A673 (cell line): ENCODE measurements at regions of chr18 and their contacts with region 1.

Region 1: GRCh38 chr18:31610286-31611205 is 18.9 kb downstream of the TTR start:
- DNase-seq: no peak
- H3K4me3 ChIP-seq: no peak overlapping the region
- H3K27ac ChIP-seq: no peak overlapping the region
- H3K4me1 ChIP-seq: no peaks in the 10 kb centered on the region
- H3K27me3 ChIP-seq: no peaks in the 10 kb centered on the region
- CTCF ChIP-seq: no peak

Region 2: GRCh38 chr18:31631526-31631925 is 21.0 kb after region 1 on chr18:
- CTCF ChIA-PET with region 1: no interaction called
- POLR2A ChIA-PET with region 1: no interaction called
- intact Hi-C with region 1: loop called (anchors 2 kb)
- DNase-seq: no peak
- H3K4me3 ChIP-seq: no peak overlapping the region
- H3K27ac ChIP-seq: no peak overlapping the region
- H3K4me1 ChIP-seq: no peaks in the 10 kb centered on the region
- H3K27me3 ChIP-seq: no peaks in the 10 kb centered on the region
- CTCF ChIP-seq: no peak

Region 3: GRCh38 chr18:31658670-31659575 is 48.4 kb after region 1 on chr18:
- CTCF ChIA-PET with region 1: no interaction called
- POLR2A ChIA-PET with region 1: no interaction called
- intact Hi-C with region 1: no loop called
- DNase-seq: peak; percentile 64
- H3K4me3 ChIP-seq: no peak overlapping the region
- H3K27ac ChIP-seq: no peak overlapping the region
- H3K4me1 ChIP-seq: peaks cover 19% of the 10 kb centered on the region
- H3K27me3 ChIP-seq: no peaks in the 10 kb centered on the region
- CTCF ChIP-seq: no peak

Region 4: GRCh38 chr18:31741097-31741735 is 130.7 kb after region 1 on chr18:
- CTCF ChIA-PET with region 1: no interaction called
- POLR2A ChIA-PET with region 1: no interaction called
- intact Hi-C with region 1: no loop called
- DNase-seq: peak; percentile 62
- H3K4me3 ChIP-seq: no peak overlapping the region
- H3K27ac ChIP-seq: no peak overlapping the region
- H3K4me1 ChIP-seq: no peaks in the 10 kb centered on the region
- H3K27me3 ChIP-seq: no peaks in the 10 kb centered on the region
- CTCF ChIP-seq: peak; percentile 85

Region 5: GRCh38 chr18:31789409-31790055 is 179.0 kb after region 1 on chr18:
- CTCF ChIA-PET with region 1: no interaction called
- POLR2A ChIA-PET with region 1: interaction called, 10 read pairs
- intact Hi-C with region 1: no loop called
- DNase-seq: no peak
- H3K4me3 ChIP-seq: no peak overlapping the region
- H3K27ac ChIP-seq: no peak overlapping the region
- H3K4me1 ChIP-seq: no peaks in the 10 kb centered on the region
- H3K27me3 ChIP-seq: no peaks in the 10 kb centered on the region
- CTCF ChIP-seq: no peak